ENCODE measurements at regions of chr1 and their contacts with region 1.

Region 1: DNA sequence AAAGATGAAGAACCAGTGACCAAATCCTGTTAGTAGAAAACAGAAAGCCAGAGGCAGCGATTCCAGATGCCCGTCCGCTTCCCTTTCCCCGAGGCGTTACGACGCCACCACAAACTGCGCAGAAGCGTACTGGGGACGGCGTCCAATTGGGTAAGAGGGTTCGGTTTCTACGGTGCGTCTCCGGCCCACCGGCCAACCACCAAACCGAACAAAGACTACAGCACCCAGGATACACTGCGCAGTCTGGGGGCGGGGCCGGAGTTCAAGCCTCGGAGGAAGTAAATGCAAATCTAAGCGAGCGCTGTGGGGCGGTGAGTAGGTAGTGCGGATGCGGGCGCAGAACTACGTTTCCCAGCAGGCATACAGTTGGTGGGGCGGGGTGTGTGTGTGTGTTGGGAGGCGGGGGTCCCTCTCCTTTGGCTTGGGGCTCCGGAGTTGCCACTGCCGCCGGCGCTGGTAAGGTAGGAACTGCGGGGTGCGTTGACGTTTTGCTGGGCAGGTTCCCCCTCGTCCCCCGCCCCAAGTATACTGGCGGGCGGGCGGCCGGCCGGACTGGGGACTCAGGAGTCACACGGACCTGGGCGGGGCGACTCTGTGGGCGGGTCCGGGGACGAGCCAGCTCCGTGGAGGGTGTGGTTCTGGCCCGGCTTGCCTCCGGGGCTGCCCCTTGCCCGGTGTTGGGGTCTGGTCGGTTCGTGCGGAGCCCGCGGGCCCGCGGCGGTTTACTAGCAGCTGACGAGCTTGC is at the starts of genes SWT1 and TRMT1L:
- DNase-seq: peak; percentile 96 to 99 (median 98)
- ATAC-seq: peak; percentile 91
- H3K4me3 ChIP-seq: peak within 1 kb of the TSS; percentile 92
- H3K4me3 Mint-ChIP-seq: peak within 1 kb of the TSS; percentile 99
- H3K27ac ChIP-seq: peak within 1 kb of the TSS; percentile 92 to 97
- H3K27ac Mint-ChIP-seq: peak within 1 kb of the TSS; percentile 95
- H3K4me1 ChIP-seq: peaks cover 16% of the 10 kb centered on the region
- H3K4me1 Mint-ChIP-seq: peaks cover 55% of the 10 kb centered on the region
- H3K27me3 ChIP-seq: no peaks in the 10 kb centered on the region
- H3K27me3 Mint-ChIP-seq: no peaks in the 10 kb centered on the region
- CTCF ChIP-seq: no peak
- total RNA-seq, gene SWT1: 4.1 to 5.3 TPM
- total RNA-seq, gene TRMT1L: 2.8 to 4.7 TPM

Region 2: GRCh38 chr1:183635606-183636333 is 1521.3 kb before region 1 on chr1 and contains the start of gene ARPC5:
- CTCF ChIA-PET with region 1: no interaction called
- POLR2A ChIA-PET with region 1: no interaction called
- intact Hi-C with region 1: loop called in 1 of 2 experiments (anchors 10 kb)
- DNase-seq: peak; percentile 91 to 99 (median 94)
- ATAC-seq: peak; percentile 88
- H3K4me3 ChIP-seq: peak within 1 kb of the TSS; percentile 93
- H3K4me3 Mint-ChIP-seq: peak within 1 kb of the TSS; percentile 100
- H3K27ac ChIP-seq: peak within 1 kb of the TSS; percentile 61 to 86
- H3K27ac Mint-ChIP-seq: peak within 1 kb of the TSS; percentile 94
- H3K4me1 ChIP-seq: peaks cover 17% of the 10 kb centered on the region
- H3K4me1 Mint-ChIP-seq: peaks cover 51% of the 10 kb centered on the region
- H3K27me3 ChIP-seq: no peaks in the 10 kb centered on the region
- H3K27me3 Mint-ChIP-seq: no peaks in the 10 kb centered on the region
- CTCF ChIP-seq: no peak
- total RNA-seq, gene ARPC5: 21.4 to 23.0 TPM

Region 3: DNA sequence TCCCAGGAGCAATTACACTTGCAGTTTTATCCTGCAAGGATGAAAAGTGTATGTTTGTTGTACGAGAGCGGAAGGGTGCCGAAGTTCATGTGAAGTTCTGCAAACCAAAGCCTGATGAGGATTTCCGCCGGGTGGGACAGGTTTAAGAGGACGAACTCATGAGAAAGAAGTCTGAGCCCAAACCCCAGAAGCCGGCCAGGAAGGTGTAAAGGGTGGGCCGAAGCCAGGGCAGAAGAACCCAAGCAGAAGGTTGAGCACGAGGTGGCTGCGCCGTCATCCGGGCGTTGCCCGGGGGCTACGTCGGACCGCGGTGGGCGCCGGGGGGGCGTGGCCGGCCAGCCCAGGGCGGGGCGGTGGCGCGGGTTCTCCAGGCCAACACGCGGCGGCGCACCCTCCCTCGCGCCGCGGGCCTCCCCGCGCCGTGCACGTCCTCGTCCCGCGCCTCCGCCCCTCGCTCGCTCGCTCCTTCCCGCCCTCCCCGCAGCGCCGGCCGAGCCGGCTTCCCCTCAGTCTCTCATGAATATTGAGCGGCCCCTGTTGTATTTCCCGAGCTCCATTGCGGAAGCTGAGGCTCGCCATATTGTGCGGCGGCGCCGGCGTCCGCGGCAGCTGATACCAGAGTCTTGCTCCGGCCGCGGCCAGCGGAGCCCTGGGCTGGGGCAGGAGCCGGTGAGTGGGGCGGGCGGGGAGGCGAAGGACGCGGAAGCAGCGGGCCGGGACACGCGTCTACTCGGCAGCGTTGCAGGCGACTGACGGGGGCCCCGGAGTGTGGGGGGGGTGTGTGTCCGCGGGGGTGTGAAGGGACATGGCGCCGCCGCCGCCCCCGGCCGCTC is 111.8 kb before region 1 on chr1 and contains the start of gene RNF2:
- CTCF ChIA-PET with region 1: no interaction called
- POLR2A ChIA-PET with region 1: interaction called, 16 read pairs
- intact Hi-C with region 1: loop called (anchors 2 to 5 kb)
- DNase-seq: peak; percentile 62 to 94 (median 76)
- ATAC-seq: peak; percentile 90
- H3K4me3 ChIP-seq: peak within 1 kb of the TSS; percentile 80
- H3K4me3 Mint-ChIP-seq: peak within 1 kb of the TSS; percentile 94
- H3K27ac ChIP-seq: peak within 1 kb of the TSS; percentile 70 to 72
- H3K27ac Mint-ChIP-seq: peak within 1 kb of the TSS; percentile 77
- H3K4me1 ChIP-seq: peaks cover 13% of the 10 kb centered on the region
- H3K4me1 Mint-ChIP-seq: peaks cover 59% of the 10 kb centered on the region
- H3K27me3 ChIP-seq: no peaks in the 10 kb centered on the region
- H3K27me3 Mint-ChIP-seq: no peaks in the 10 kb centered on the region
- CTCF ChIP-seq: peak; percentile 15
- total RNA-seq, gene RNF2: 7.4 to 9.0 TPM

Region 4: GRCh38 chr1:185559684-185560331 is 402.8 kb after region 1 on chr1:
- CTCF ChIA-PET with region 1: no interaction called
- POLR2A ChIA-PET with region 1: no interaction called
- intact Hi-C with region 1: loop called (anchors 10 kb)
- DNase-seq: peak in 10 of 14 experiments; percentile 17 to 84 (median 41)
- ATAC-seq: peak; percentile 69
- H3K4me3 ChIP-seq: no peak overlapping the region
- H3K4me3 Mint-ChIP-seq: peak overlapping the region; percentile 63
- H3K27ac ChIP-seq: peak overlapping the region in 1 of 2 donors; percentile 12
- H3K27ac Mint-ChIP-seq: peak overlapping the region; percentile 63
- H3K4me1 ChIP-seq: peaks cover 33% of the 10 kb centered on the region
- H3K4me1 Mint-ChIP-seq: peaks cover 54% of the 10 kb centered on the region
- H3K27me3 ChIP-seq: no peaks in the 10 kb centered on the region
- H3K27me3 Mint-ChIP-seq: no peaks in the 10 kb centered on the region
- CTCF ChIP-seq: no peak

Region 5: GRCh38 chr1:185670187-185670627 is 513.2 kb after region 1 on chr1:
- CTCF ChIA-PET with region 1: no interaction called
- POLR2A ChIA-PET with region 1: interaction called, 7 read pairs
- intact Hi-C with region 1: loop called (anchors 5 kb)
- DNase-seq: peak; percentile 40 to 78 (median 54)
- ATAC-seq: peak; percentile 77
- H3K4me3 ChIP-seq: no peak overlapping the region
- H3K4me3 Mint-ChIP-seq: no peak overlapping the region
- H3K27ac ChIP-seq: no peak overlapping the region
- H3K27ac Mint-ChIP-seq: peak overlapping the region; percentile 55
- H3K4me1 ChIP-seq: peaks cover 14% of the 10 kb centered on the region
- H3K4me1 Mint-ChIP-seq: peaks cover 47% of the 10 kb centered on the region
- H3K27me3 ChIP-seq: no peaks in the 10 kb centered on the region
- H3K27me3 Mint-ChIP-seq: no peaks in the 10 kb centered on the region
- CTCF ChIP-seq: peak; percentile 71

Region 6: DNA sequence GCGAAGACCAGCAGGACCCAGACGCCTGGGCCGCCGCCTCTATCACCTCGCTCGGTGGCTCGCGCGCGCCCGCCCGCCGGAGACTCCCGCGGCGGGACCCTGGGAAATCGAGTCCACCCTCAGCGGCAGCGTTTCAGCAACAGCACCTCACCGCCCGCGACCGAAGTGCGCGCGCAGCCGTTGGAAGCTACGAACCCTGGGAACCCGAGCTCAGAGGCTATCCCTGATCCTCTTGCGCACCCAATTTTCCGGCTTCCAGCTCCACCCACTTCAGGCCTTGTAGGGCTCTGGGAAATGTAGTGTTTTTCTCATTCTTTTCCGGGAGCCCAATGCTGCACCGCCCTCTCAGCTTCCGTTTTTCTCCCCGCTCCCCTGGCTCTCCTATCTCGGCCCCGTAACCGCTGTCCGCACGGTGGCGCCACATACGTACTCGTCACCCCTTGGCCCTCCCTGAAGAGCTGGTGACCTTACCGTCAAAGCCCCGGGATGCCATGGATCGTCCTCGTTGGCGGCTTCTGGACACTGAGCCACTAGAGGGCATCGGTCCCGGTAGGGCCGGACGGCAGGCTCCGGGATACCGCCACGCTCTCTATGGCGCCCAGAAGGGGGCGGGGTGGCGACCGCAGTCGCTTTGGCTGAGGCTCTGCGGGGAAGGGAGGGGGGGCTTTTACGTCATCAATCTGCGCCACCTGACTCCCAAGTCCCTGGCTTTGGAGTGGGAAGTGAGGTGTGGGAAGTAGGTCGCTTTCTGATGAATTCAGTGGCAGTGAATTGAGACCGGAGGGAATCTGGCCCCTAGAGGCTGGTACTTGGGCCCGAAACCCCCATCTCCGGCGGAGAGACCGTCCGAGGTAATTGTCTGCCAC is 1218.3 kb after region 1 on chr1 and contains the starts of genes ODR4 and TPR:
- CTCF ChIA-PET with region 1: interaction called, 3 read pairs
- POLR2A ChIA-PET with region 1: interaction called, 13 read pairs
- intact Hi-C with region 1: loop called (anchors 2 to 5 kb)
- DNase-seq: peak; percentile 89 to 99 (median 94)
- ATAC-seq: peak; percentile 87
- H3K4me3 ChIP-seq: peak within 1 kb of the TSS; percentile 79
- H3K4me3 Mint-ChIP-seq: peak within 1 kb of the TSS; percentile 92
- H3K27ac ChIP-seq: peak within 1 kb of the TSS; percentile 89 to 96
- H3K27ac Mint-ChIP-seq: peak within 1 kb of the TSS; percentile 93
- H3K4me1 ChIP-seq: peaks cover 16% of the 10 kb centered on the region
- H3K4me1 Mint-ChIP-seq: peaks cover 77% of the 10 kb centered on the region
- H3K27me3 ChIP-seq: no peaks in the 10 kb centered on the region
- H3K27me3 Mint-ChIP-seq: no peaks in the 10 kb centered on the region
- CTCF ChIP-seq: peak; percentile 85
- total RNA-seq, gene ODR4: 21.3 to 24.5 TPM
- total RNA-seq, gene TPR: 82.3 to 91.3 TPM